ENCODE measurements at regions of chr6 and their contacts with region 1.

Region 1: GRCh38 chr6:100880853-100881706 is at the start of gene ASCC3:
- DNase-seq: peak; percentile 91
- H3K4me3 ChIP-seq: peak within 1 kb of the TSS; percentile 73
- H3K27ac ChIP-seq: peak within 1 kb of the TSS; percentile 46
- H3K4me1 ChIP-seq: peaks cover 23% of the 10 kb centered on the region
- CTCF ChIP-seq: no peak
- total RNA-seq, gene ASCC3: 28.5 and 35.4 TPM in 2 replicates

Region 2: GRCh38 chr6:100780678-100781077 is 100.4 kb before region 1 on chr6:
- CTCF ChIA-PET with region 1: no interaction called
- POLR2A ChIA-PET with region 1: no interaction called
- intact Hi-C with region 1: no loop called
- DNase-seq: no peak
- H3K4me3 ChIP-seq: no peak overlapping the region
- H3K27ac ChIP-seq: no peak overlapping the region
- H3K4me1 ChIP-seq: no peaks in the 10 kb centered on the region
- CTCF ChIP-seq: no peak

Region 3: DNA sequence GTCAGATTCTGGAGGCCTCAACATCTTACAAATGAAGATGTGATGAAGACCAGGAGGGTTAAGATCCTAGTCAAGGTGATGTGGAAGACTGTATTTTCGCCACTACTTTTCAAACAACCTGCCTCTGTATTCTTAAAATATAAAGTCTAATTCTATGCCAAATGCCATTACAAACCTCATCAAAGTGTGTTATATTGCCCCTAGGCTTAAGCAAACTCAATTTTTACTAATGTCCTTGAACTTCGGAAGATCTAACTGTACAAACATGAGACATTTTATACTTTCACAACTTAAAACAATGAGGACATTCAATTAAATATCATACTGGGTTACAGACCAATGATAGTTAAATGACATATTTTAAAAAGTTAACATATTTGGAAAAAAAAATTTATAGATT is 19.0 kb before region 1 on chr6:
- CTCF ChIA-PET with region 1: no interaction called
- POLR2A ChIA-PET with region 1: interaction called, 22 read pairs
- intact Hi-C with region 1: no loop called
- DNase-seq: no peak
- H3K4me3 ChIP-seq: no peak overlapping the region
- H3K27ac ChIP-seq: no peak overlapping the region
- H3K4me1 ChIP-seq: no peaks in the 10 kb centered on the region
- CTCF ChIP-seq: no peak

Region 4: DNA sequence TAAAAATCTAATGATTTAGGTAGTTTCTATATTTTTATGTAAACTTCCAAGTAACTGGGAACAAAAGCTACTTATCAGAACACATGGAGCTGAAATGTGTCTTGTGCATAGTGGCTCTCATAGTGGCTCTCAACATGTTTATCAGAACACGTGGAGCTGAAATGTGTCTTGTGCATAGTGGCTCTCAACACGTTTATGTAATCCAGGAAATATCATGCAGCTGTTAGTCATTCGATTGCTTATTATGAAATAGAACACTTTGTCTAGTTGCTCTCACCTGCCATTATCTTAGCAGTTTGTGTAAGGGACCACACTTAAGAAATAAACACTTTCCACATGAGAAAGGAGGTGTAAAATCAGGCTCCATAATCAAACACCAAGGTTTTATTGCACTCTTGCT is 119.3 kb after region 1 on chr6:
- CTCF ChIA-PET with region 1: no interaction called
- POLR2A ChIA-PET with region 1: interaction called, 7 read pairs
- intact Hi-C with region 1: loop called (anchors 2 kb)
- DNase-seq: peak; percentile 27
- H3K4me3 ChIP-seq: no peak overlapping the region
- H3K27ac ChIP-seq: peak overlapping the region; percentile 36
- H3K4me1 ChIP-seq: peaks cover 28% of the 10 kb centered on the region
- CTCF ChIP-seq: no peak

Region 5: DNA sequence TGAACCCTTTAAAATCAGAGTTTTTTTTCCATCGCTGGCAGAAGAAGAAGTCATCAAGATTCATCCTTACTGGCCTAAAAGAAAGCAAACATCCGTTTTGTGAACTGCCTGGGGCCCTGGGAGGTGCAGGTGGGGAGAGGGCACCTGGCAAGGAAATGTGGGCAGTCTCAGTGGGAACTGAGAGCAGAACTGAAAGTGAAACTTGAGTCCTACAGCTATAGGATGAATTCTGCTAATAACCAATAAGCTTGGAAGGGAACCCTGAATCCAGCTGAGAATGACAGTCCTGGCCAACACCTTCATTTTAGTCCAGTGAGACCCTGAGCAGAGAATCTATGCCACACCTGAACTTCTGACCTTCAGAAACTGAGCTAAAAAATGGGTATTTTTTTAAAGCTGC is 130.1 kb after region 1 on chr6:
- CTCF ChIA-PET with region 1: no interaction called
- POLR2A ChIA-PET with region 1: interaction called, 9 read pairs
- intact Hi-C with region 1: loop called (anchors 2 kb)
- DNase-seq: peak; percentile 90
- H3K4me3 ChIP-seq: peak overlapping the region; percentile 44
- H3K27ac ChIP-seq: peak overlapping the region; percentile 90
- H3K4me1 ChIP-seq: peaks cover 51% of the 10 kb centered on the region
- CTCF ChIP-seq: no peak

Measured in OCI-LY7 (cell line).